Activated CD8-positive, alpha-beta T cell treated with anti-CD3 and anti-CD28 coated beads, Interleukin-2, amount 10 ng/mL, durations not matched to agents 7 days and 5 days (primary cell): ENCODE measurements at regions of chr3 and their contacts with region 1.

Region 1: DNA sequence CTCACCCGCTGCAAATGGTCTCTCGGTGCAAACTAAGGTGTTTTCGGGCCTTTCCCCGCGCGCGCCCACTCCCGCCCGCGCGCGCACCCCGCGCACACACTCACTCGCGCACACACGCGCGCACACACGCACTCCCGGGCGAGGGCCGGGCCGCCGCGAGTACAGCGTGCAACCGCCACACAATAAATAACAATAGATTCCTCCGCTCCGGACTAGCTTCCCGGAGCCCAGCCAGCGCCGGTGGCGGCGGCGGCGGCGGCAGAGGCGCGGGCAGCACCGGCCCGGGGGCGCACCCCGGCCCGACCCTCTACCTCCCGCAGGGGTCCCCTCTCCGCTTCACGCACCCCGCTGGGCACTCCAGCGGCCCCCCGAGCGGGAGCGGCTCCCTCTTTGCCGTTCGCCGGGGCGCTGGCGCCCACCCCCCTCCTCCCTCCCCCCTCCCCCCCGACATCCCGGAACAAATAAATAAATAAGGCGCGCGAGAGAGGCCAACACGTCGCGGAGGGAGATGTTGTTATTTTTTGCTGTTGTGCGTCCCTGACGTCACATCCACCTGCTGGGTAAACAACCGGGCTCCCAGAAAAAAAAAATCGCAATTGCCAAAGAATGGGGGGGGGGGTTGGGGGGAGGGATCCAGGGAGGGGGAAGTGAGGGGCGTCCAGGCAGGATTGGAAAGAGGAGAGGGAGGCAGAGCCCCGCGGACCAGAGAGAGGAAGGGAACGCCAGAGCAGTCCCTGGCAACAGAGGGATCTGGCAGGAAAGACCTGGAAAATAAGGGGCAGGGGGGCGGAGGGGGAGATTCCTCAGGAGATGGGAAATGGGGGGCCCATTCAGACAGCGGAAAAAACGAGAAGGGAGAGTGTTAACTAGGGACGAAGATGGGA is at the start of gene FOXP1:
- DNase-seq: peak; percentile 72
- ATAC-seq: peak; percentile 43
- H3K4me3 Mint-ChIP-seq: peak within 1 kb of the TSS; percentile 85
- H3K27ac Mint-ChIP-seq: peak within 1 kb of the TSS; percentile 92
- H3K4me1 Mint-ChIP-seq: peaks cover 39% of the 10 kb centered on the region
- H3K27me3 Mint-ChIP-seq: no peaks in the 10 kb centered on the region
- total RNA-seq, gene FOXP1: 120 to 122 TPM

Region 2: GRCh38 chr3:70550723-70551319 is 1033.0 kb before region 1 on chr3:
- CTCF ChIA-PET with region 1: interaction called, 19 read pairs
- POLR2A ChIA-PET with region 1: no interaction called
- DNase-seq: peak; percentile 78
- ATAC-seq: peak; percentile 84
- H3K4me3 Mint-ChIP-seq: no peak overlapping the region
- H3K27ac Mint-ChIP-seq: no peak overlapping the region
- H3K4me1 Mint-ChIP-seq: no peaks in the 10 kb centered on the region
- H3K27me3 Mint-ChIP-seq: peaks cover 3% of the 10 kb centered on the region

Region 3: GRCh38 chr3:71226565-71227269 is 357.1 kb before region 1 on chr3:
- CTCF ChIA-PET with region 1: interaction called, 11 read pairs
- POLR2A ChIA-PET with region 1: interaction called, 5 read pairs
- DNase-seq: peak; percentile 92
- ATAC-seq: peak; percentile 92
- H3K4me3 Mint-ChIP-seq: peak overlapping the region; percentile 73
- H3K27ac Mint-ChIP-seq: peak overlapping the region; percentile 95
- H3K4me1 Mint-ChIP-seq: peaks cover 60% of the 10 kb centered on the region
- H3K27me3 Mint-ChIP-seq: no peaks in the 10 kb centered on the region

Region 4: GRCh38 chr3:71305231-71306206 is 278.3 kb before region 1 on chr3:
- CTCF ChIA-PET with region 1: interaction called, 3 read pairs
- POLR2A ChIA-PET with region 1: interaction called, 10 read pairs
- DNase-seq: peak; percentile 46
- ATAC-seq: peak; percentile 38
- H3K4me3 Mint-ChIP-seq: peak overlapping the region; percentile 89
- H3K27ac Mint-ChIP-seq: peak overlapping the region; percentile 92
- H3K4me1 Mint-ChIP-seq: peaks cover 80% of the 10 kb centered on the region
- H3K27me3 Mint-ChIP-seq: no peaks in the 10 kb centered on the region

Region 5: DNA sequence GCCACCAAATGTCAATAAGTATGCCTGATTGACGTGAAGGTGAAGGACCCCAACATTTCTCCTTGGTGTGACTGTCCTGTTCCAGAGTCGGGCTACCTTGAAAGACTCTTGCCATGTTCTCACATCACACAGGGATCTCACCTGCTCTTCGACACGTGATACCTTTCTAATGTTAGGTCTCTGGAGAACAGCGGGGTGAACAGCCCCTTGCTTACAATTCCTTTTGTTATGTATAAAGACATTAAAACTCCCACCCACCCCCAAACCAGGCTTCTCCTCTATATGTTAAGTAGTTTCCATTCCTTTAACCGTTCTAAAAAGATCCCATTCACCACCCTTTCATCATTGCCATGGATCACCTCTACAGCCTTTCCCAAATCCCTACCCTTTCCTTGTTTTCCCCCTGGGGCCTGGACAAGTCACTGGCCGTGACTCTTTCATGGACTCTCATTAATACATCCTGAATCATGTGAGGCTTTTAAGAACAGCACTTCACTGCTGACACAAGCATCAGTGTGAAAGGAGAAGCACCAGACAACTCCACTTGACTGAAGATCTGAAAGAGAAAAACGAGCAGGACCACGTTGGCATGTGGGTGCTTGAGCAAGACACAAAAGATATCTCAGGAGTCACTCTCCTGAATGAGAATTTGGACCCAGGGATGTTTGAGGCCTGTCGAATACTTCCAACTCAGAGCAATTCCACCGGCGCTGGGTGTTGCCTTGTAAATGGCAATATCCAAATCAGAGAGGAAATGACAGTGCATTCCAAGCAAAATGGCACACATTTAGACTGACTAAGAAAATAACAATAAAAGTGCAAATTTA is 115.3 kb before region 1 on chr3:
- CTCF ChIA-PET with region 1: no interaction called
- POLR2A ChIA-PET with region 1: no interaction called
- DNase-seq: no peak
- ATAC-seq: no peak
- H3K4me3 Mint-ChIP-seq: no peak overlapping the region
- H3K27ac Mint-ChIP-seq: no peak overlapping the region
- H3K4me1 Mint-ChIP-seq: peaks cover 17% of the 10 kb centered on the region
- H3K27me3 Mint-ChIP-seq: no peaks in the 10 kb centered on the region

Region 6: GRCh38 chr3:71495708-71496472 is 87.9 kb before region 1 on chr3:
- CTCF ChIA-PET with region 1: no interaction called
- POLR2A ChIA-PET with region 1: interaction called, 27 read pairs
- DNase-seq: peak; percentile 52
- ATAC-seq: peak; percentile 69
- H3K4me3 Mint-ChIP-seq: peak overlapping the region; percentile 66
- H3K27ac Mint-ChIP-seq: peak overlapping the region; percentile 90
- H3K4me1 Mint-ChIP-seq: peaks cover 71% of the 10 kb centered on the region
- H3K27me3 Mint-ChIP-seq: no peaks in the 10 kb centered on the region

Region 7: GRCh38 chr3:71554649-71555048 is 29.2 kb before region 1 on chr3:
- CTCF ChIA-PET with region 1: no interaction called
- POLR2A ChIA-PET with region 1: no interaction called
- DNase-seq: no peak
- ATAC-seq: no peak
- H3K4me3 Mint-ChIP-seq: no peak overlapping the region
- H3K27ac Mint-ChIP-seq: no peak overlapping the region
- H3K4me1 Mint-ChIP-seq: peaks cover 3% of the 10 kb centered on the region
- H3K27me3 Mint-ChIP-seq: no peaks in the 10 kb centered on the region

Region 8: DNA sequence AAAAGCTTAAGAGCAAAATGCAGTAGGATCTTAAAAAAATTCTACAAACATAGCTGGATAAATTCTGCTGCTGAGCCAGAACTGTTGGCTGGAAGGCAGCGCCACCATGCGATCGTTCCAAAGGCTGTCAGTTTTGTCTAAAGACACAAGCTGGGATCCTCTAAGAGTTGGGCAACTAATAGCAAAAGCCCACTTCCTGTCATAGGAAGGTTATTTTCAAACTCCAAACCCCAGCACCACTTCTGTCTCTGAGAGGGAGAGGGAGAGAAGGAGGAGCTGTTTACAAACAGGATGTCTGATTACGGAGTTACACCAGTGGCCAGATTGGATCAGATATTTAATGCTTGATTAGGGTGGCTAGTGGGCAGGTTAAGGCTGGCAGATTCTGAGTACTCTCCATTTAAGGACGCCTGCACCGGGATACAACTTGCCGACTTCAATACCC is 97.4 kb after region 1 on chr3:
- CTCF ChIA-PET with region 1: interaction called, 14 read pairs
- POLR2A ChIA-PET with region 1: no interaction called
- DNase-seq: peak; percentile 52
- ATAC-seq: peak; percentile 67
- H3K4me3 Mint-ChIP-seq: no peak overlapping the region
- H3K27ac Mint-ChIP-seq: peak overlapping the region; percentile 30
- H3K4me1 Mint-ChIP-seq: peaks cover 17% of the 10 kb centered on the region
- H3K27me3 Mint-ChIP-seq: no peaks in the 10 kb centered on the region